ENCODE measurements at regions of chr7 and their contacts with region 1.

Region 1: GRCh38 chr7:74051629-74052410 is 23.8 kb downstream of the ELN start:
- DNase-seq: peak; percentile 25
- ATAC-seq: peak in 1 of 2 donors; percentile 4

Region 2: DNA sequence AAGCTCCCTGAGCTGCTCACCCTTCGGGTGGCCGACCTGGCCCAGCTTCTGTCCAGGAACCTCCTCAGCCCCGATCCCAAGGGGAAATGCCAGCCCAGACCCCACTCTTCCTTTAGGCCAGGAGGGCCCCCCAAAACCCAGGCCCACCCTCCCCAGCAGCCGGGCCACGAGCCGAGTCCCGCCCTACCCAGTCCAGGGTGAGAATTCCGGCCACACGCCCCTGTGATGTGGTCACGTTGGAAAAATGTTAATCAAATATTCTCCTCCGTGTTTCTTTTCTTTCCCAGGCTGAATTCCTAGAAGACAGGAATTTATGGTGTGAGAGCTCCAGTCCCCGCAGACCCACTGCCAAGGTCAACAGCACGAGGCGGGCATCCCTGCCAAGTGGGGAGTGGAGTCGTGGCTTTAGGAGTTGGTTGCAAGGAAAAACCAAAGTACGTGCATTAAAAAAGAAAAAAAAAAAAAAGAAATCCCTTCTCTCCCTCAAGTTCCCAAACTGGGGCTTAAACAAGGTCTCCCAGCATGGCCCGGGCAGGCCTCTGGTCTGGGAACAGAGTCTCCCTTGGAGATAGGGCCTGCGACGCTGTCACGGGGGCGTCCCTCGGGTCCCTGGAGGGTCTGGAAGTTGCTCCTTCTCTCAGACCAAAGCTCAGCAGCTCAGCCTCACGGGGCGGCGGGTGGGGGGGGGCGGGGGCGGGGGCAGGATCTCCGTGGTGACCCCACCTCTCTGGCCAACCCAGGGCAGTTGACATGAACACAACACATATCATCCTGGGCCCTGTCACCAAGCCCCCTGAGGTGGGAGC is 52.0 kb before region 1 on chr7:
- intact Hi-C with region 1: loop called in 1 of 2 experiments (anchors 10 kb)
- DNase-seq: peak; percentile 80
- ATAC-seq: peak; percentile 62 to 82